ENCODE measurements at regions of chr12 and their contacts with region 1.

Region 1: DNA sequence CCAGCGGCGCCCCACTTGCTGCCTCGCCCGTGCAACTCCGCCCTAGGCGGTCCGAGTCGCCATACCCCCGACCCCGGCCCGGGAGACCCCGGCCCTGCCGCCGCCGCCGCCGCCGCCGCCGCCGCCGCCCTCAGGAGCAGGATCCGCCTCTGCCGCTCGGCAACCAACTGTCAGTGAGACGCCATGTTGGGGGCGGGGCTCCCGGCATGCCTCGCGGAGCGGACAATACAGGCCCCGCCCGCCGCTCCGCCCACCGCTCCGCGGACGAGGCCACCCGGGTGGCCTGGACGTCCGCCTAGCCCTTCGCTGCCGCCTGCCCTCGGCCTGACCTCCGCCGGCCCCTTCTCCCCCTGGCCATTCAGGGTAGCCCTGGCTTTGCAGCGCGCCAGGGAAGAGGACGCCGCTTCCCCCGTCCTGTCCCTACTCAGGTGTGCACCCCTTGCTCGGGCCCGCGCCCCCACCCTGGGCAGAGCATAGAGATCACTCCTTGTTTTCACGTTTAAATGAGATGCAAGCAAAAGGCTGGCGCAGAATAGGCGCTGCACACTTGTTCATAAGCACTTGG is at the start of gene HECTD4:
- DNase-seq: peak; percentile 96 to 99 (median 97)
- ATAC-seq: peak; percentile 98 to 100 (median 99)
- H3K4me3 ChIP-seq: peak within 1 kb of the TSS; percentile 72 to 100 (median 94)
- H3K27ac ChIP-seq: peak within 1 kb of the TSS; percentile 39 to 94 (median 86)
- H3K4me1 ChIP-seq: peaks cover 0 to 29% (median 12%) of the 10 kb centered on the region in 12 donors
- H3K27me3 ChIP-seq: no peaks in the 10 kb centered on the region
- CTCF ChIP-seq: no peak
- POLR2A ChIP-seq: peak; percentile 20 to 89
- total RNA-seq, gene HECTD4: 16.2 to 30.7 (median 23.9) TPM

Region 2: GRCh38 chr12:112198120-112198733 is 184.1 kb before region 1 on chr12:
- intact Hi-C with region 1: loop called (anchors 1 to 10 kb)
- DNase-seq: peak in 2 of 5 donors; percentile 49 to 52
- ATAC-seq: peak in 3 of 4 donors; percentile 72 to 83 (median 81)
- H3K4me3 ChIP-seq: no peak overlapping the region
- H3K27ac ChIP-seq: no peak overlapping the region
- H3K4me1 ChIP-seq: peaks cover 0 to under 1% (median 0%) of the 10 kb centered on the region in 12 donors
- H3K27me3 ChIP-seq: no peaks in the 10 kb centered on the region
- CTCF ChIP-seq: peak; percentile 30 to 63 (median 50)
- POLR2A ChIP-seq: no peak

Region 3: DNA sequence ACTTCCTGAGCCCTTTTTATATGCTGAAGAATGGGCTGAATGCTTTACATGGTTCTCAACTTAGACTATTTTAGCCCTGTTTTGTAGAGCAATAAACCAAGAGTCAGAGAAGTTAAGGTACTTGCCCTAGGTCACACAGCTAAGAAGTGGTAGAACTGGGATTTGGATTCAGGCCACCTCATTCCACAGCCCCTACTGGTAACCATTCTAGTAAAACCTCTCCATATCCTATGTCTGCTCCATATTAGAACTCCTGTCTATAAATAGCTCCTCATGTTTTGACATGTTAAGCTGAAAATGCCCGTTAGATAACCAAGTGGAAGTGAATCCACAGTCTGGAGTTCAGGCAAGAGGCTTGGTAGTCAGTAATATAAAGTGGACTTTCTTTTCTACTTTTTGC is 111.6 kb before region 1 on chr12:
- intact Hi-C with region 1: loop called in 1 of 10 experiments (anchors 10 kb)
- DNase-seq: no peak
- ATAC-seq: no peak
- H3K4me3 ChIP-seq: no peak overlapping the region
- H3K27ac ChIP-seq: no peak overlapping the region
- H3K4me1 ChIP-seq: peaks cover 0 to 5% (median 0%) of the 10 kb centered on the region in 12 donors
- H3K27me3 ChIP-seq: no peaks in the 10 kb centered on the region
- CTCF ChIP-seq: no peak
- POLR2A ChIP-seq: no peak

Region 4: DNA sequence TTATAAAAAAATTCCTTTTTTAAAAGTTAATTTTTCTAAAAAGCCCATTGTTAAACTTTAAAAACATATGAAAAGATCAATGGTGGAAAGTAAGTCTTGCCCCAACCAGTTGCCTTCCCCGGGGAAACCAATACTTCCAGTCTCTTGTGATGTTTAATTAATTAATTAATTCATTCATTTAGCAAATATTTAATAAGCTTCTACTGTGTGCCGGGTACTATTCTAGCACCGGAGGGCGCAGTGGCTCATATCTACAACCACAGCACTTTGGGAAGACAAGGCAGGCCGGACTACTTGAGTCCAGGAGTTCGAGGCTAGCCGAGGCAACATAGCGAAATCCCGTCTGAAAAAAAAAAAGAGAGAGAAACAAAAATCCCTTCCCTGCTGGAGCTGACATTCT is 87.5 kb before region 1 on chr12:
- intact Hi-C with region 1: loop called in 6 of 10 experiments (anchors 10 kb)
- DNase-seq: no peak
- ATAC-seq: no peak
- H3K4me3 ChIP-seq: no peak overlapping the region
- H3K27ac ChIP-seq: no peak overlapping the region
- H3K4me1 ChIP-seq: no peaks in the 10 kb centered on the region
- H3K27me3 ChIP-seq: no peaks in the 10 kb centered on the region
- CTCF ChIP-seq: peak in 2 of 12 donors; percentile 12 to 14
- POLR2A ChIP-seq: no peak

Region 5: DNA sequence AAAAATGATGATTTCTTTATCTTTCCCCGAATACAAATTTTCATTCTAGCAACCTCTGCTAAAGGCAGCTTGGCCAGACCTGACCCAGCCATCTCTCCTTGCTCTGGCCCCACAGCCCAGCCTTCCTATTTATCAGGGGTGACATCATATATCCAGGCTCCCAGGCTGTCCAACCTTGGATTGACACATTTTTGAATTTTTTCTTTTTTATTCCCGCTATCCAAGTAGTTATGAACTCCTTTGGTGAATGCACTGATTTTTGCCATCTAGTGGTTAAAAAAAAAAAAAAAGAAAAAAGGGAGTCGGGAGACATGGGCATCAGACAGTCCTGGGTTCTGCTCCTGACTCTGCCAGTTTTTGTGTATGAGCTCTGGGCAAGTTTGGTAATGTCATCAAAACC is 156.9 kb after region 1 on chr12:
- intact Hi-C with region 1: no loop called
- DNase-seq: no peak
- ATAC-seq: no peak
- H3K4me3 ChIP-seq: no peak overlapping the region
- H3K27ac ChIP-seq: no peak overlapping the region
- H3K4me1 ChIP-seq: no peaks in the 10 kb centered on the region
- H3K27me3 ChIP-seq: peaks cover 0 to 4% (median 0%) of the 10 kb centered on the region in 9 donors
- CTCF ChIP-seq: no peak
- POLR2A ChIP-seq: no peak

Measured in heart left ventricle (tissue), 16 donors.